ENCODE measurements at regions of chr6 and their contacts with region 1.

Region 1: GRCh38 chr6:142692942-142693341 is 252.0 kb downstream of the HIVEP2 start:
- DNase-seq: peak; percentile 41 to 92 (median 74)

Region 2: GRCh38 chr6:142871910-142872331 is 179.0 kb after region 1 on chr6:
- intact Hi-C with region 1: loop called (anchors 10 kb)
- DNase-seq: peak in 5 of 42 donors; percentile 22 to 51 (median 41)

Region 3: DNA sequence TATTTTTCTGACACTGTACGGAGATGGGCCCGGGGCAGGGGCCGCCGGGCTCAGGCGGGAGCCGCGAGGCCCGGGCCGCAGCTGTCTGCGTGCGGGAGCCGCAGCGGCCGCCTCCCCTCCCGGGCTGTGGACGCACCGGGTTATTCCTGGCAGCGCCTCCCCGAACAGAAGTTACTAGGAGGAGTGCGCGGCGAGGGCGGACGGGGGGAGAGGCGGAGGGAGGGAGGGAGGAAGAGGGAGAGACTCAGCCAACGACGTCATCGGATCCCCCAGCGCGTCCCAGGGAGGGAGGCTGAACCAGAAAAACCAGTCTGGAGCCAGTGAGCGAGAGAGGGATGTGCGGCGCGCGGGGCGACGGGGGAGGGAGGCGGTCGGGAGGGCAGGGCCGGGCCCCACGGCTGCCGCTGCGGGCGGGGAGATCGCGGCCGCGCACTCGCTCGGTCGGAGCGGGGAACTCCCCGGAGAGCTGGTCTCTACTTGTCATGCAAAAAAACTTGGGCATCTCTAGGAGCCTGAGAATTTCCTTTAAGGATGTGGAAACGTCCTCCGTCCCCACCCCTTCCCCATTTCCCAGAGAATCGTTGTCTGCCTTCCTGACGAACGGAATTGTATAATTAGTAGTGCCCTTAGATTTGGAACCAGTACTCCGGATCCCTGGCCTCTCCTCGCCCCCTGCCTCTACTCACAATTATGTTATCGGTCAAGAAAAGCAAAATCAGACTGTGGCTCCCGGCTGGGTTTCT is 253.4 kb after region 1 on chr6:
- intact Hi-C with region 1: loop called (anchors 5 kb)
- DNase-seq: peak; percentile 89 to 100 (median 97)

Region 4: GRCh38 chr6:143026696-143027449 is 333.9 kb after region 1 on chr6:
- intact Hi-C with region 1: loop called (anchors 5 kb)
- DNase-seq: peak in 40 of 42 donors; percentile 12 to 79 (median 48)

Region 5: GRCh38 chr6:143427109-143427817 is 734.3 kb after region 1 on chr6:
- intact Hi-C with region 1: loop called (anchors 5 kb)
- DNase-seq: peak; percentile 62 to 90 (median 80)

Measured in head of caudate nucleus (tissue), 42 donors.